ENCODE measurements at regions of chr16 and their contacts with region 1.

Region 1: GRCh38 chr16:69318177-69318910 is 7.2 kb downstream of the VPS4A start:
- DNase-seq: no peak
- ATAC-seq: peak; percentile 36 to 62 (median 46)
- H3K4me3 ChIP-seq: no peak overlapping the region
- H3K27ac ChIP-seq: peak overlapping the region; percentile 77
- H3K4me1 ChIP-seq: peaks cover 21% of the 10 kb centered on the region
- H3K27me3 ChIP-seq: no peaks in the 10 kb centered on the region
- CTCF ChIP-seq: no peak

Region 2: DNA sequence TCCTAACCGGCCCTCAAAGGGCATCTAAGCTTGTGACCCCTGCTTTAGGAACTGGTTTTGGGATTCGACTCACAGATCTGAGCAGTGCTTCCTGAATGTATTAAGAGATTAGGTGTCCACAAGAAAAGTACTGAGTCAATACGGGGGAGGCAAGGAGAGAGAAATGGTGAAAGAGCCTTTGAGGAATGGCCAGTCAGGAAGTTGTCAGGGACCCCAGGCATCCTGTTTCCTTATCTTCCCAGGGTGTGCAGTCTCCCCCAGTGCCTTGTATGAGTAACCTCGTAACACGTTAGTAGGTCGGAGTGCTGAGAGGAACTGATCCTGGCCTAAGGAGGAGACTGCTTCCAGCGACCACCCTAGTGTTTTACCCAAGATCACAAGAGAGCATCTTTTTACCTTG is 49.6 kb after region 1 on chr16:
- intact Hi-C with region 1: no loop called
- DNase-seq: no peak
- ATAC-seq: no peak
- H3K4me3 ChIP-seq: no peak overlapping the region
- H3K27ac ChIP-seq: no peak overlapping the region
- H3K4me1 ChIP-seq: no peaks in the 10 kb centered on the region
- H3K27me3 ChIP-seq: no peaks in the 10 kb centered on the region
- CTCF ChIP-seq: no peak

Region 3: GRCh38 chr16:69386596-69386995 is 68.3 kb after region 1 on chr16:
- intact Hi-C with region 1: loop called in 1 of 2 experiments (anchors 2 kb)
- DNase-seq: no peak
- ATAC-seq: no peak
- H3K4me3 ChIP-seq: peak overlapping the region; percentile 74
- H3K27ac ChIP-seq: peak overlapping the region; percentile 88
- H3K4me1 ChIP-seq: peaks cover 11% of the 10 kb centered on the region
- H3K27me3 ChIP-seq: no peaks in the 10 kb centered on the region
- CTCF ChIP-seq: no peak

Measured in psoas muscle (tissue), 8 donors.